ENCODE measurements at regions of chr1 and their contacts with region 1.

Region 1: GRCh38 chr1:32072622-32073298 is at the start of gene TMEM39B:
- DNase-seq: peak; percentile 100
- ATAC-seq: peak; percentile 95
- total RNA-seq, gene TMEM39B: 7.1 TPM

Region 2: DNA sequence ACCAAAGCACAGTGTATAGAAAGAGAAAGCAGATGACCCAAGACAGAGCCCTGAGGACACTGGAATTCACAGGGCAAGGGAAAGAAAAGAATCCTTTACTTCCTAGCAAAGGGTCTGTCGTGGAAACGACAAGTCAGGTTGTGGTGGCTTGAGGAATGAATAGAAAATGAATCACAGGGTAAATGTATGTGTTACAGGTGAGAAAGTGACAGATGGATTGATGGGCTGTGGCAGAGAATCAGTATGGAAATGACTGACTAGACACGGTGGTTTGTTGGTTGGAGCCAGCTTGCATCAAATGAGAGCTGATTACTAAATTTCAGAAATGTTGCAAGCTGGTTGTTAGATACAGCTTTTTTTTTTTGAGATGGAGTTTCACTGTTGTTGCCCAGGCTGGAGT is 181.5 kb before region 1 on chr1:
- intact Hi-C with region 1: no loop called
- DNase-seq: no peak
- ATAC-seq: no peak

Region 3: DNA sequence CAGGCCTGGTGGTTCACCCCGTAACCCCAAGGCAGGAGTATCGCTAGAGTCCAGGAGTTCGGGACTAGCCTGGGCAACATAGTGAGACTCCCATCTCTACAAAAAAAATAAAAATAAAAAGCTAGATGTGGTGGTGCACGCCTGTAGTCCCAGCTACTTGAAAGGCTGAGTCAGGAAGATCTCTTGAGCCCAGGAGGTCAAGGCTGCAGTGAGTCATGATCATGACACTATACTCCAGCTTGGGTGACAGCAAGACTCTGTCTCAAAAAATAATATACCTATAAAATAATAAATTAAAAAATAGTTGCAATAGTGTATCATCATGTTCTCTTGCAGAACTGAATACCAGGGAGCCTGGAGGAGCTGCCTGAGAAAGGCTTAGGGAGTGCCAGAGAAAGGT is 19.9 kb before region 1 on chr1:
- intact Hi-C with region 1: no loop called
- DNase-seq: no peak
- ATAC-seq: no peak

Region 4: GRCh38 chr1:32107742-32108661 is 35.2 kb after region 1 on chr1 and contains the start of gene KPNA6:
- intact Hi-C with region 1: loop called (anchors 5 kb)
- DNase-seq: peak; percentile 91
- ATAC-seq: peak; percentile 92
- total RNA-seq, gene KPNA6: 70.3 TPM

Region 5: DNA sequence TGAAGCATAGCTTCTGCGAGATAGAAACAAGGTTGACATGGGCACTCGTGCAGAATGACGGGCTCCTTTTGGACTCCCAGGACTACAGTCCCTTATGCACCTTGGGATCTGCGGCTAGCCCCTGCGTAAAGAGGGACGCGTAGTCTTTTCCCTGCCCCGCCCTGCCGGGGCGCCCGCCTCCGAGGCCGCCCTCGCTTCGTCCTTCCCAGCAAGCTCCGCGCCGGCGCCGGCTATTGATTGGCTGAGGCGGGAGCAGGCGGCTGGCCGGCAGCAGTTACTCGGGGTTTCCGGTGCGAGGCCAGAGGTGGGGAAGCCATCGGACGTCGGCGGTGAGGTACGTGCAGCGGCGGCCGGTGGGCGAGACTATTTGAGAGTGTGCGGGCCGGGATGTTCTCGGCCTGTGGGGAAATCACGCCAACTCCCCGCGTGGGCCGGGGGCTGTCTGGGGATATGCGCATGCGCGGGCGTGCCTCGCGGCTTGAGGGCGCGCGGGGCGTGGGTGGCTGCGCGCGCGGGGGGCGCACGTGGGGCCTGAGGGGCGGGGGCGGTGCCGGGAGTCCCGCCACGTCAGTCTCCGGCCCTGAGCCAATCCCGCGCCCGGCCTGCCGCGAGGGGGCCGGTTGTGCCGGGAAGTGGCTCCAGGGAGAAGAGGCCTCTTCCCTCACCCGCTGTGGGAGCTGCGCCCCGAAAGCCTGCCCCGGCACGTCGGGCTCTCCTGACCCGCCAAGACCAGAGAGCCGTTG is 106.9 kb after region 1 on chr1 and contains the start of gene TXLNA:
- intact Hi-C with region 1: loop called (anchors 5 kb)
- DNase-seq: peak; percentile 99
- ATAC-seq: peak; percentile 96
- total RNA-seq, gene TXLNA: 17.4 TPM